Breast epithelium (tissue), 4 donors: ENCODE measurements at regions of chr10 and their contacts with region 1.

Region 1: GRCh38 chr10:73529089-73529832 is 33.4 kb upstream of the PPP3CB start:
- DNase-seq: peak in 1 of 2 donors; percentile 30
- H3K4me3 ChIP-seq: no peak overlapping the region
- H3K27ac ChIP-seq: no peak overlapping the region
- H3K4me1 ChIP-seq: no peaks in the 10 kb centered on the region
- H3K27me3 ChIP-seq: no peaks in the 10 kb centered on the region
- CTCF ChIP-seq: peak; percentile 69 to 89 (median 84)
- POLR2A ChIP-seq: no peak

Region 2: DNA sequence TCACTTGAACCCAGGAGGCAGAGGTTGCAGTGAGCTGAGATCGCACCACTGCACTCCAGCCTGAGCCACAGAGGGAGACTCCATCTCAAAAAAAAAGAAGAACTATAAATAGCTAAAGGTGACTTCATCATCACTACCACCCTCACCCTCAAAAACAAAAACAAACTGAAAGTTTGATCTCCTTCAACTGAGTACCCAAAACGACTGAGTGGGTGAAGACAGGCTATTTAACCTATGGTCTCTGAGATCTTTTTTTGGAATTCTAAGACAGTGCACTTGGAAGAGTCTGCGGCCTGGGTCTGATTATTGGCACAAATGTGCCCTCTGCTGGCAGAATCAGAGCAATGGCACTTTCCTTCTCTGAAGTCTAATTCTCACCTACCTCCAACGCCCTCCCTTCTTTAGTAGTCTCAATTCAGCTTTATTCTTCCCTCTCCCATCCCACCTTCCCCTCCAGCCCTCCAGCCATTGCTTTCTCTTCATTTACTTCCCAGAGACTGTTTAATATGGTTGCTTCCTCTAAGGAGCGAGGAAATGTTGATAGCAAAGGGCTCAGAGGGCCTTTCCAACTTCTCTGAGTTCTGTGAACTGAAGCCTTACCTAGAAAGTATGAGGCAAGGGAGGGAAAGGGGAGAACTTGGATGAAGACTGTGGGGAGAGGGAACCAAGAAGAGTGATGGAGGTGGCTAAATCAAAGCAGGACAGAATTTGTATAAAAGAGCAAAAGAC is 114.9 kb after region 1 on chr10:
- intact Hi-C with region 1: loop called (anchors 2 kb)
- DNase-seq: peak; percentile 41 to 51
- H3K4me3 ChIP-seq: no peak overlapping the region
- H3K27ac ChIP-seq: no peak overlapping the region
- H3K4me1 ChIP-seq: no peaks in the 10 kb centered on the region
- H3K27me3 ChIP-seq: no peaks in the 10 kb centered on the region
- CTCF ChIP-seq: peak; percentile 76 to 98 (median 89)
- POLR2A ChIP-seq: no peak

Region 3: DNA sequence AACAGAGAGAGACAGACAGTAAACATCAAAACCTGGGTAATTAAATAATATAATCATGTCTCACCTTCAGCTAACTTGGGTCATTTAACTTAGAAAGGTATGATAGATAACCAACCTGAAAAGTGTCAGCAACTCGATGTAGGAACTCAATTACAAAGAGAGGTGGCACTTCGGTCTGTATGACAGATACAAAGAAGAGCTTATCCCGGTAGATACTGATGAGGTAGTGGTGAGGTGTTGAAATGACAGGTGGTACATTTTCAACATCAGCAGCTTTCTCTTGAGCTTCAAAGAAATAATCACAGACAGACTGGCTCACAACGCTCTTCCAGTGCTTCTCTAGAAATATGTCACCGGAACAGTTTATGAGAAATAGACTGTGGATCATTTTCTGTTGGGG is 608.7 kb after region 1 on chr10:
- intact Hi-C with region 1: no loop called
- DNase-seq: no peak
- H3K4me3 ChIP-seq: no peak overlapping the region
- H3K27ac ChIP-seq: no peak overlapping the region
- H3K4me1 ChIP-seq: no peaks in the 10 kb centered on the region
- H3K27me3 ChIP-seq: no peaks in the 10 kb centered on the region
- CTCF ChIP-seq: no peak
- POLR2A ChIP-seq: no peak

Region 4: GRCh38 chr10:74244097-74244685 is 714.9 kb after region 1 on chr10:
- intact Hi-C with region 1: no loop called
- DNase-seq: no peak
- H3K4me3 ChIP-seq: no peak overlapping the region
- H3K27ac ChIP-seq: no peak overlapping the region
- H3K4me1 ChIP-seq: no peaks in the 10 kb centered on the region
- H3K27me3 ChIP-seq: no peaks in the 10 kb centered on the region
- CTCF ChIP-seq: peak; percentile 24 to 48 (median 38)
- POLR2A ChIP-seq: no peak